ENCODE measurements at regions of chr5 and their contacts with region 1.

Region 1: GRCh38 chr5:159987031-159987674 is 21.8 kb upstream of the TTC1 start:
- DNase-seq: peak; percentile 81 to 91 (median 87)
- H3K4me3 ChIP-seq: peak overlapping the region; percentile 29 to 77 (median 60)
- H3K27ac ChIP-seq: no peak overlapping the region
- H3K4me1 ChIP-seq: peaks cover 0 to 12% (median 7%) of the 10 kb centered on the region in 4 experiments
- H3K27me3 ChIP-seq: peaks cover 3 to 34% (median 19%) of the 10 kb centered on the region in 5 experiments

Region 2: DNA sequence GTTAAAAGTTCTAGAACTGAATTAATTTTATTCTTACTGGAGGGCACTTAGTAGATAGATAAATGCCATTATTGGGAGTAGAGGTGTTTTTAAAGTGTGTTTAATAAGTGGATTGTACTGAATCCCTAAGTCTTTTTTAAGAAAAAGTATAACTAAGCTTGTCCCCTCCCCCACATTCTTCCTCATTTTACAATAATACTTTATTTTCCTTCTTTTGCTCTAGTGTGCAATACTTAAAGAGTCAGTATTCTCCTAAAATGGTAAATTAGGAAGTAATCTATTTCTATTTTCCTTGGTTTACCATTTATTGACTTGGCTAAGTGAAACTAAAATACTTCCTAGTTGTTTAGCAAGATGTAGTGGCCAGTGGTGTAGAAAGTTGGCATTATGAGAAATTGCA is 712.5 kb before region 1 on chr5:
- CTCF ChIA-PET with region 1: interaction called, 10 read pairs
- POLR2A ChIA-PET with region 1: no interaction called
- DNase-seq: peak in 1 of 3 donors; percentile 27
- H3K4me3 ChIP-seq: peak overlapping the region in 4 of 7 experiments; percentile 0 to 65 (median 24)
- H3K27ac ChIP-seq: no peak overlapping the region
- H3K4me1 ChIP-seq: peaks cover 0 to 9% (median 4%) of the 10 kb centered on the region in 4 experiments
- H3K27me3 ChIP-seq: no peaks in the 10 kb centered on the region

Region 3: DNA sequence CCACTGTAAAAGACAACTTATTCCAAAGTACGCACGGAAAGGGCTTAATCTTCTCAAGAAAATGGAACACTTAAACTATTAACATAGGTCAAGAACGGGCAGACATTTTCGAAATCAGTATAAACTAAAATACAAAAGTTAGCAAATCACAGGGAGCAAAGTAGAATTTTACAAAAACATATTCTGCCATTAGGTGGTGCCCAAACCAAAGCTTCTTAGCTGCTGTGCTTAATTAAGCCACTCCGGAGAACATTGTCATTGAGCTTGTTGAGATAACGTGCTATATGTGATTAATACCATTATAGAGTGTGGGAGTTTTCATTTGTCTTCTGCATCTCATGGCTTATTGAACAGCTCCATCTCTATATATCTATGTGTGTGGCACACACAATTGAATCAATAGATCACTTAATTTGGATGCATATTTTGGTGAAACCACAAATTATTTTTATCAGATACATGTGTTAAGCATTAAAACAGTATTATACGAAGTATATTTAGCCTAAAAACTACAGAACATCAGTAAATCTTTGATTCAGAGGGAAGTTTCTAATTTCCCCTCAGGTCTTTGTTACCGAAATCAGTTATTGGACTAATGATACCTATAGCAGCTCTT is 700.6 kb before region 1 on chr5:
- CTCF ChIA-PET with region 1: interaction called, 27 read pairs
- POLR2A ChIA-PET with region 1: no interaction called
- DNase-seq: peak; percentile 60 to 81 (median 79)
- H3K4me3 ChIP-seq: no peak overlapping the region
- H3K27ac ChIP-seq: no peak overlapping the region
- H3K4me1 ChIP-seq: peaks cover 0 to 4% (median 2%) of the 10 kb centered on the region in 4 experiments
- H3K27me3 ChIP-seq: no peaks in the 10 kb centered on the region

Region 4: GRCh38 chr5:159444441-159445082 is 542.6 kb before region 1 on chr5:
- CTCF ChIA-PET with region 1: interaction called, 46 read pairs
- POLR2A ChIA-PET with region 1: no interaction called
- DNase-seq: peak; percentile 53 to 72 (median 68)
- H3K4me3 ChIP-seq: no peak overlapping the region
- H3K27ac ChIP-seq: no peak overlapping the region
- H3K4me1 ChIP-seq: no peaks in the 10 kb centered on the region
- H3K27me3 ChIP-seq: peaks cover 0 to 9% (median 0%) of the 10 kb centered on the region in 5 experiments

Region 5: DNA sequence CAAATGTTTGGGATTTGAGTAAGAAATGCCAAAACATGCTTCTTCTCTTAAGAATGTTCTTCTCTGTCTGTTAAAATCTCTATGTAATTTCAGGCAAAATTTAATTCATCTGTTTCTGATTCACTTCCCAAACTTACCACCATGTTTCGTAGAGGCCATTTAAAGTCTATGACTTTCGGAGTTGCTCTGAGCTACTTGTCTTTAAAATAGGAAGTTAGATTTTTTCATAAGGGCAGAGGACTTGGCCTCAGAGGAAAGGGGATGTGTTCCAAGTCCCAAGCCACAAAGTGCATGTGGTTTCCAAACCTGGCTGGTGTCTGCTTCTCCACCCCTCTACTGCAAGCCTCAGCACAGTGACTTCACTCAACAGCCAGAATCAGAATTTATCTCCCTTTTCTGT is 182.1 kb before region 1 on chr5:
- CTCF ChIA-PET with region 1: no interaction called
- POLR2A ChIA-PET with region 1: no interaction called
- DNase-seq: peak; percentile 82 to 96 (median 96)
- H3K4me3 ChIP-seq: no peak overlapping the region
- H3K27ac ChIP-seq: no peak overlapping the region
- H3K4me1 ChIP-seq: peaks cover 8 to 30% (median 13%) of the 10 kb centered on the region in 4 experiments
- H3K27me3 ChIP-seq: peaks cover 0 to 7% (median 0%) of the 10 kb centered on the region in 5 experiments

Region 6: GRCh38 chr5:159975462-159976019 is 11.6 kb before region 1 on chr5:
- CTCF ChIA-PET with region 1: interaction called, 32 read pairs
- POLR2A ChIA-PET with region 1: interaction called, 3 read pairs
- DNase-seq: no peak
- H3K4me3 ChIP-seq: no peak overlapping the region
- H3K27ac ChIP-seq: no peak overlapping the region
- H3K4me1 ChIP-seq: peaks cover 2 to 14% (median 9%) of the 10 kb centered on the region in 4 experiments
- H3K27me3 ChIP-seq: peaks cover 20 to 68% (median 33%) of the 10 kb centered on the region in 5 experiments

Region 7: DNA sequence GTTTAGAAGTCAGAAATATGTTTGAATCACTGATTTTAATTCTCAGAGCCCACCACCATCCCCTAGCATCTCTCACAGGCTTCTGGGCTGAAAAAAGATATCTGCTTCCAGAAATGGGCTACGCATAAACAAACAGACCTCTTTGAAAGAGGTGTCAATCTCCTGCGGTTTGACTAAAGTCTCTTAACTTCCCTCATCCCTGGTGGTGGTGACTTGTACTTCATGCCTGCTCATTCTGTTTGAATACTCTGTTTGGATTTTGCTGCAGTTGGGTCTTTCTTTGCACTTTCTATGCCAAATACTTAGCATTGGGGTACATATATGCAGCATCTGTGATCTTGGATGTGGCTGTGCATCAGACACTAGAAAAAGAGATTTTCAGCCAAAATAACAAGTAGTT is 1022.0 kb after region 1 on chr5:
- CTCF ChIA-PET with region 1: no interaction called
- POLR2A ChIA-PET with region 1: no interaction called
- DNase-seq: no peak
- H3K4me3 ChIP-seq: no peak overlapping the region
- H3K27ac ChIP-seq: no peak overlapping the region
- H3K4me1 ChIP-seq: no peaks in the 10 kb centered on the region
- H3K27me3 ChIP-seq: no peaks in the 10 kb centered on the region